Esophagus muscularis mucosa (tissue), 4 donors: ENCODE measurements at regions of chr1 and their contacts with region 1.

Region 1: GRCh38 chr1:156517746-156518145 is 17.2 kb upstream of the MEF2D start:
- DNase-seq: no peak
- H3K4me3 ChIP-seq: no peak overlapping the region
- H3K27ac ChIP-seq: no peak overlapping the region
- H3K4me1 ChIP-seq: peaks cover 6 to 10% (median 10%) of the 10 kb centered on the region in 4 donors
- H3K27me3 ChIP-seq: no peaks in the 10 kb centered on the region
- CTCF ChIP-seq: no peak
- EP300 ChIP-seq: no peak
- POLR2A ChIP-seq: no peak

Region 2: GRCh38 chr1:156571949-156572662 is 54.4 kb after region 1 on chr1 and contains the start of gene IQGAP3:
- intact Hi-C with region 1: loop called (anchors 5 kb)
- DNase-seq: no peak
- H3K4me3 ChIP-seq: peak within 1 kb of the TSS; percentile 44 to 57 (median 49)
- H3K27ac ChIP-seq: no peak within 1 kb of the TSS
- H3K4me1 ChIP-seq: peaks cover 7 to 17% (median 13%) of the 10 kb centered on the region in 4 donors
- H3K27me3 ChIP-seq: peaks cover 0 to 8% (median 0%) of the 10 kb centered on the region in 4 donors
- CTCF ChIP-seq: peak in 1 of 3 experiments; percentile 19
- EP300 ChIP-seq: no peak
- POLR2A ChIP-seq: no peak
- total RNA-seq, gene IQGAP3: 0.06 to 1.1 (median 0.50) TPM in 3 of 4 donors, not detected in the other